AG04450 (cell line): ENCODE measurements at regions of chr3 and their contacts with region 1.

Region 1: GRCh38 chr3:148309390-148310035 is 388.2 kb upstream of the AGTR1 start:
- DNase-seq: no peak
- H3K4me3 ChIP-seq: no peak overlapping the region
- H3K27ac ChIP-seq: no peak overlapping the region
- H3K27me3 ChIP-seq: no peaks in the 10 kb centered on the region
- CTCF ChIP-seq: peak; percentile 94

Region 2: DNA sequence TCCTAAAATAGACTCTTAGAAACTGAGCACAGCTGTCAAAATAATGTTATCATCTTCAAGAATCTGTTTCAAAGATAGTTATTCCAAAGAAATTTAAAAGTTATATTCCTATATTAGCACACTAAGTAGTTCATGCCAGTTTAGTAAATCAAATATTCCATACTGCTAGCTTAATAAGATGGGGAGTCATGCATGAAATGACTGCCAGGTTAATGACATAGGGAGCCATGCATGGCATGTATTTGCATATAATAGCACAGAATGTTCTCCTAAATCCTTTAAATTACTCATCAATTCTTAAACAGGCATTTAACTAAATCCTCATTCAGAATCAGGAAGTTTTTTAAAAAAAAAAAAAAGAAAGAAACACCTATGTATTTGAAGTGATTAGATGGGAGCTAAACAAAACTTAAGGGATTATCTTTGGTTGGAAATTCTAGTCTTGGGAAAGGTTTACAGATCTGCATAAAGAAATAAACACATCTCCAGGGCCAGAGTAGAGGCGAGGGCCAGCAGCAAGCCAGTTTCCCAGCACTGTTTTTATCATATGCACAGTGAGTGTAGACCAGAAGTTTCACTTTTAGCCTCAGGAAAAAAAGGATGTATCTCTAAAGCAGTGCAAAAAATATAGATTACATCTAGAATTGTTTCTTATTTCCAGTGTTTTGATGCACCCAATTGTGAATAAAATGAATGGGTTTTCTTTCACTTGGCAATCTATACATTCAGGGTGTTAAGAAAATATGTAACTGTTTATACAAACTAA is 21.8 kb after region 1 on chr3:
- CTCF ChIA-PET with region 1: interaction called, 13 read pairs
- POLR2A ChIA-PET with region 1: no interaction called
- DNase-seq: no peak
- H3K4me3 ChIP-seq: no peak overlapping the region
- H3K27ac ChIP-seq: no peak overlapping the region
- H3K27me3 ChIP-seq: no peaks in the 10 kb centered on the region
- CTCF ChIP-seq: no peak

Region 3: GRCh38 chr3:148343416-148343815 is 33.9 kb after region 1 on chr3:
- CTCF ChIA-PET with region 1: interaction called, 10 read pairs
- POLR2A ChIA-PET with region 1: no interaction called
- DNase-seq: no peak
- H3K4me3 ChIP-seq: no peak overlapping the region
- H3K27ac ChIP-seq: no peak overlapping the region
- H3K27me3 ChIP-seq: no peaks in the 10 kb centered on the region
- CTCF ChIP-seq: no peak

Region 4: DNA sequence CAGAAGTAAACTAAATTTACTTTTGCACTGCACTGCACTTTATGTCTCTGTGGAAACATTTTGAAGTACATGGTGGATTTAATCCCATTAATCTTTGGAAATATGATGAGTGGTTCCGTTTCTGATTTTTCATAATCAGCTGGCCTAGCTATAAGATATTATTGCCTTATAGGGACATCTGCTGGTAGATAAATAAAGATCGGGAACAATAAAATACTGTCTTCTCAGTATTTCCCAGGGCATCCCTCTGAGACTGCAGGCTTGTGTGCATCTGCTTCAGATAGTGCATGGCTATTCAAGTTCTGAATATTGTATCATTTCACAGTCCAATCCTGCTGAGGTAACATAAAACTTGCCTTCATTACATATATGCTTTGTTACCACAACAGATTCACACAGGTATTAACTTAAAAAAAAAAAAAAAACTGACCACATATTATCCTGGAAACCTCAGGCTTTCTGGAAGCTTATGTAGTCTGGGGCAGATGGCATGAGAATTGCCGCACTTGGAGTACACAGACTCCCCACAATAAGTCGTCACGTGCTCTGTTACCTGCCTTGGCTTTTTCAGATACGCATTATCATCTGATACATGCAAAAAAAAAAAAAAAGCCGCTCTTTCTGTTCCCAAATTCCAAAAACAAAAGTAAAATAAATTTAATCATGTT is 57.4 kb after region 1 on chr3:
- CTCF ChIA-PET with region 1: interaction called, 30 read pairs
- POLR2A ChIA-PET with region 1: no interaction called
- DNase-seq: no peak
- H3K4me3 ChIP-seq: no peak overlapping the region
- H3K27ac ChIP-seq: no peak overlapping the region
- H3K27me3 ChIP-seq: no peaks in the 10 kb centered on the region
- CTCF ChIP-seq: peak; percentile 36

Region 5: DNA sequence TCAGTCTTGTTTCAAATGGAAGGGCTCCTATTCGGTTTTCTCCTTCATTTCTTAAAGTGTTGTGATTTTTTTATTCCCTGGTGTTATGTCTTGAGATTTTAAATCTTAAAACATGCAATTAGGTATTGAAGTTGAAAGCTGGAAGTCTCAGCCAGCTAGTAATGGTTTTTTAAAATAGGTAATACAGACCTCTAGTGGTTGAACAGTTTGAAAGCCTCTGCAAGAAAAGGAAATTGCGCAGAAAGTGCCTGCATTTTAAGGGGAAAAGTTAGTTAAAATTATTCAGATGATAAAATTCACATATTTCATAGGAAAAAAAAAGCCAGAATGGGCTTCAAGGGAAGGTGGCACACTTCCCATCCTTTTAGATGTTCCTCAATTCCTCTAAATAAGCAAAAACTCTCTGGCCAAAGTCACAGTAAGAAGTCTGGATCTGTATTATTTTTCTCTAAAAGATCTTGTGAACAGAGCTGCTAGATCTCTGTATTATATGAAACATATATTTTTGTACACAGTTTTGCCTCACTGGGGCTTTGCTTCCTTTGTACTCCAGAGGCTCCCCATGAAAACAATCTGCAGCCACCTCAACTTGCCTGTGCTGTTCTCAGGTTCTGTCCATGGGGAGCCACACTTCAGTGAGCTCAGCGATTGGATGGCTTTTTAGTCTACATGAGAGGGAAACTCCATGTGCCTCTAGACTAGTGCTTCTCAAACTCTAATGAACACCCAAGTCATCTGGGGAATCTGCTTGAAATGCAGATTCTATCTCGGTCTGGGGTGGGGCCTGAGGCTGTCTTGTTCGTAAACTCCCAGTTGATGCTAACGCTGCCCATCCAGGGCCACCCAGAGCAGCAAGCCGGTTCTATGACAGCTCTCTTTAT is 409.7 kb after region 1 on chr3:
- CTCF ChIA-PET with region 1: interaction called, 15 read pairs
- POLR2A ChIA-PET with region 1: no interaction called
- DNase-seq: no peak
- H3K4me3 ChIP-seq: no peak overlapping the region
- H3K27ac ChIP-seq: no peak overlapping the region
- H3K27me3 ChIP-seq: no peaks in the 10 kb centered on the region
- CTCF ChIP-seq: peak; percentile 61